T-cell (primary cell): ENCODE measurements at regions of chr6 and their contacts with region 1.

Region 1: GRCh38 chr6:88748141-88748540 is 215.3 kb downstream of the RNGTT start:
- DNase-seq: no peak
- ATAC-seq: no peak
- H3K4me3 ChIP-seq: no peak overlapping the region
- H3K4me3 Mint-ChIP-seq: no peak overlapping the region
- H3K27ac ChIP-seq: no peak overlapping the region
- H3K27ac Mint-ChIP-seq: peak overlapping the region in 1 of 2 donors; percentile 72
- H3K4me1 ChIP-seq: no peaks in the 10 kb centered on the region
- H3K4me1 Mint-ChIP-seq: no peaks in the 10 kb centered on the region
- H3K27me3 ChIP-seq: no peaks in the 10 kb centered on the region
- H3K27me3 Mint-ChIP-seq: no peaks in the 10 kb centered on the region

Region 2: GRCh38 chr6:88963139-88964090 is 215.3 kb after region 1 on chr6 and contains the start of gene RNGTT:
- CTCF ChIA-PET with region 1: no interaction called
- POLR2A ChIA-PET with region 1: interaction called in 1 of 2 experiments, 14 read pairs
- DNase-seq: peak; percentile 91 to 98 (median 95)
- ATAC-seq: peak; percentile 99 to 100 (median 100)
- H3K4me3 ChIP-seq: peak within 1 kb of the TSS; percentile 88 to 96
- H3K4me3 Mint-ChIP-seq: peak within 1 kb of the TSS; percentile 98 to 99 (median 98)
- H3K27ac ChIP-seq: peak within 1 kb of the TSS; percentile 56
- H3K27ac Mint-ChIP-seq: peak within 1 kb of the TSS; percentile 74 to 95
- H3K4me1 ChIP-seq: peaks cover 4 to 31% of the 10 kb centered on the region in 2 experiments
- H3K4me1 Mint-ChIP-seq: peaks cover 45 to 55% (median 48%) of the 10 kb centered on the region in 3 donors
- H3K27me3 ChIP-seq: no peaks in the 10 kb centered on the region
- H3K27me3 Mint-ChIP-seq: no peaks in the 10 kb centered on the region
- total RNA-seq, gene RNGTT: 16.6 to 22.2 (median 17.5) TPM

Region 3: GRCh38 chr6:89483111-89483720 is 735.1 kb after region 1 on chr6:
- CTCF ChIA-PET with region 1: no interaction called
- POLR2A ChIA-PET with region 1: no interaction called
- DNase-seq: no peak
- ATAC-seq: no peak
- H3K4me3 ChIP-seq: no peak overlapping the region
- H3K4me3 Mint-ChIP-seq: no peak overlapping the region
- H3K27ac ChIP-seq: no peak overlapping the region
- H3K27ac Mint-ChIP-seq: no peak overlapping the region
- H3K4me1 ChIP-seq: no peaks in the 10 kb centered on the region
- H3K4me1 Mint-ChIP-seq: no peaks in the 10 kb centered on the region
- H3K27me3 ChIP-seq: no peaks in the 10 kb centered on the region
- H3K27me3 Mint-ChIP-seq: peaks cover 0 to 4% of the 10 kb centered on the region in 2 donors